Vagina (tissue), 2 donors: ENCODE measurements at regions of chr17 and their contacts with region 1.

Region 1: DNA sequence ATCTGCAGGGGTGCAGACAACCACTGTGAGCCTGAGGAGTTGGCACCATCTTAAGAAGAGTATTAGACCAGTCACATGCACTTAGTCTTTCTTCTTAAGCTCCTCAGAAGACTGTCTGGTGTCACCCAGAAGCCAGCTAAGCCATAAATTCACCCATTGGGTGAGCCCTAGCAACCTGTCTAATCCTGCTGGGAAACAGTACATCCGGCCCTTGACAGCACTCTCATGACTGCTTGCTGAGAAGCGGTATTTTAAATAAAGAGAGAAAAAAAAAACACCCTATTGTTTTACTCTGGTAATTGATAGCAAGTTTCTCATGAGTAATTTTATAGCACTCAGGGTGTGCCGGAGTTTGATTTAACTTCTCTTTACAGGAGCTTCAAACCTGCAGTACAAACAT is 134.7 kb downstream of the SOX9 start:
- DNase-seq: no peak
- H3K4me3 ChIP-seq: no peak overlapping the region
- H3K27ac ChIP-seq: no peak overlapping the region
- H3K4me1 ChIP-seq: no peaks in the 10 kb centered on the region
- H3K27me3 ChIP-seq: no peaks in the 10 kb centered on the region
- CTCF ChIP-seq: no peak
- POLR2A ChIP-seq: no peak

Region 2: GRCh38 chr17:72244494-72244893 is 11.0 kb before region 1 on chr17:
- intact Hi-C with region 1: loop called (anchors 1 kb)
- DNase-seq: no peak
- H3K4me3 ChIP-seq: no peak overlapping the region
- H3K27ac ChIP-seq: no peak overlapping the region
- H3K4me1 ChIP-seq: no peaks in the 10 kb centered on the region
- H3K27me3 ChIP-seq: no peaks in the 10 kb centered on the region
- CTCF ChIP-seq: no peak
- POLR2A ChIP-seq: no peak

Region 3: DNA sequence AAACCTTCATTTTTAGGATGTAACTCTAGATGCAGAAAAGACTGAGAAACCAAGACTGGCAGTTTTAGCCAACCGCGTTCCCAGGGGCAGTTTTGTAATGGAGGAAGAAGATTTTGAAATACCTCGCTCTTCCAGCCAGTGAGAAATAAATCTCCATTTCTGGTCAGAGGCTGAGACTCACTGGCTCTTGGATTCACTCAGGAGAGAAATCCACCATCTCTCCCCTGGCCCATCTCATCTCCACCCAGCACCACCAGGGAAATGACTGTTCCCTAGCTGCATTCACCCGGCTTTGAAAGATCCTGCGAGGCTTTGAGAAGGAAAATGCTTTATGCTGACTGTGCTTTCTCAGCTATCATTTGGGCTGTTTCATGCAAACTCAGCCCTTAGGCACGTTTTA is 50.6 kb after region 1 on chr17:
- intact Hi-C with region 1: no loop called
- DNase-seq: no peak
- H3K4me3 ChIP-seq: no peak overlapping the region
- H3K27ac ChIP-seq: no peak overlapping the region
- H3K4me1 ChIP-seq: no peaks in the 10 kb centered on the region
- H3K27me3 ChIP-seq: no peaks in the 10 kb centered on the region
- CTCF ChIP-seq: no peak
- POLR2A ChIP-seq: no peak

Region 4: DNA sequence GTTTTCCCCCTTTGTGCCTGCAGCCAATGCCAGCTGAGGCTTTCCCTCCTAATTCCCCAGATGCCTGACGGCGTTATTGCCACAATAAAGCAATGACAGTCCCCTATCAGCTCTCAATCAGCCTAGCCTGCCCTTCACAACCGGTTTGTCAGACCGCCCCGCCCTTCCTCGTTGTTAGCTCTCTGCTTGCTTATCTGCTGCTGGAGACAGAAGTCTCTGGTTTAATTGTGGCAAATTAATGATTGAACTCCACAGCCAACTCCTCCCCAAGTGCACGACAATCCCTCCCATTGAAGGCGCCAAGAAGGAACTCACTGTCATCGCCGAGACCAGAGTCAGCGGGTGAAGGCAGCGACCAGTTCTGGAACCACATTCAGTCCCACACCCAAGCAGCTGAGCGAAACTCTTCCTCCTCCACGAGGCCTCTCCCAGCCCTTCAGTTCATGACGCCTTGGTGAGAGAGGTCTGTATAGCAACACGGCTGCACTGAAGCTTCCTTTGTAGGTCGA is 362.6 kb after region 1 on chr17:
- intact Hi-C with region 1: no loop called
- DNase-seq: no peak
- H3K4me3 ChIP-seq: no peak overlapping the region
- H3K27ac ChIP-seq: no peak overlapping the region
- H3K4me1 ChIP-seq: peaks cover 30% of the 10 kb centered on the region
- H3K27me3 ChIP-seq: no peaks in the 10 kb centered on the region
- CTCF ChIP-seq: no peak
- POLR2A ChIP-seq: no peak